GM10248 (cell line): ENCODE measurements at regions of chr2 and their contacts with region 1.

Region 1: DNA sequence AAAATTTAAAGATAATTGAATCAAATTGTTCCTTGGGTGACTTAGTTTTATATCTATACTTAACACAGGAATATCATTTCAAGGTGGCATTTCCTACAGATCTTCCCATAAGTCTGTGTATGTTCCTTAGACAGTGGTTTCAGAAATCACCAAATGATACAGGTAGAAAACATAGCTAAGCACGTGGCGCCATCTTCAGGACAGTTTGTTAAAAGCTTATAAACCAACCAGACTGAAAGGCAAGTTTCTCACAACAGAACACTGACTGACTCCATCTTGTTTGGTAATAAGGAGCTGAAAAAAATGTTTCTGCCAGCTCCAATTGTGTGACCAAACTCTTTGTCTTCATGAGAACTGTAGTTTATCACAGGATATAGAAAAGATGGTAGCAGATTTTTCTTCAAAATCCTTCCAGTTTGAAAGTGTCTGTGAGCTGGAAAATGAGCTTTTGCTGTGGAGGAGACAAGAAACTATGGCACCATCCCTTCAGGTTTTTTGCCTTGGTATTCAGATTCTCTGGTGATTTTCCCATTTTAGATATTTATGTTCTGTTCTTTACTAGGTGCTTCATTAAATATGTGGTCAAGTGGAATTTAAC is 34.8 kb upstream of the NEUROD1 start:
- DNase-seq: peak; percentile 57
- CTCF ChIP-seq: peak; percentile 79

Region 2: GRCh38 chr2:181058378-181059269 is 656.5 kb before region 1 on chr2:
- CTCF ChIA-PET with region 1: interaction called, 11 read pairs
- POLR2A ChIA-PET with region 1: no interaction called
- DNase-seq: no peak
- CTCF ChIP-seq: peak; percentile 80

Region 3: DNA sequence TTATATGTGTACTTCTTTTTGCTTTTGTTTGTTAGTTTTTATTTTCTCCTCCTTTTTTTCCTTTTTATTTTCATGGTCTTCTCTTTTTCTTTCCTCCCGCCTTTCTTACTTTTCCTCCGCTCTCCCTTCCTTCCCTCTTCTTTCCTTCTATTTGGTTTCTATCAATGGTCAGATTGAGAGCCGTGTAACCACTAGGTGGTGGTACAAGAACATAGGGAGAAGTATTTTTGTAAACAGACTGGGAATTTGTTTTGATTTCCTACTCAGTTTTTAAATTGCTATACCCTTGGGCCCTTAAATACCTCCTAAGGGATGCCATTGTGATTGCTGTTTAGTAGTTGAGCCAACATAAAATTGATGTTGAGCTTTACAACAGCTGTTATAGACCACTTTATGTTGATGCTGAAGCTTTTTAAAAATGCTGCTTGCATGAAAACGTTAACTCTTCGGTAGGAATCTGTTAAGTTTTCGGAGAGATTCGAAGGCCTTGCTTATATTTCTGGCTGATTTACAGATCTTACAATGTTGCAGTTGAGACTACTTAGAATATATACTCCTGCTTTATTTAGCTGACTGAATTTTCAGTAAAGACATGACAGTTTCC is 610.5 kb before region 1 on chr2:
- CTCF ChIA-PET with region 1: interaction called, 10 read pairs
- POLR2A ChIA-PET with region 1: no interaction called
- DNase-seq: no peak
- CTCF ChIP-seq: peak; percentile 77

Region 4: GRCh38 chr2:181563101-181563692 is 151.9 kb before region 1 on chr2:
- CTCF ChIA-PET with region 1: interaction called, 83 read pairs
- POLR2A ChIA-PET with region 1: no interaction called
- DNase-seq: no peak
- CTCF ChIP-seq: no peak

Region 5: DNA sequence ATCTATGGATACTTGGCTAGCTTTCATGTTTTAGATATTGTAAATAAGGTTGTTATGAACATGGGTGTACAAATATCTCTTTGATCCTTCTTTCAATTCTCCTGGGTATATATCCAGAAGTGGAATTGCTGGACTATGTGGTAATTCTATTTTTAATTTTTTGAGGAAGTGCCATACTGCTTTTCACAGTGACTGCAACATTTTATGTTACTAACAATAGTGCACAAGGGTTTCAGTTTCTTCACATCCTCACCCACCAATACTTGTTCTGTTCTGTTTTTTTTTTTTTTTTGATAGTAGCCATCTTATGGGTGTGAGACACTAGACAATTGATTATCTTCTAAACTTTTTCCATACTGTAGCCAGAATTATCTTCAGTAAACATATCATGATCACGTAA is 17.6 kb before region 1 on chr2:
- CTCF ChIA-PET with region 1: interaction called, 12 read pairs
- POLR2A ChIA-PET with region 1: no interaction called
- DNase-seq: no peak
- CTCF ChIP-seq: no peak

Region 6: DNA sequence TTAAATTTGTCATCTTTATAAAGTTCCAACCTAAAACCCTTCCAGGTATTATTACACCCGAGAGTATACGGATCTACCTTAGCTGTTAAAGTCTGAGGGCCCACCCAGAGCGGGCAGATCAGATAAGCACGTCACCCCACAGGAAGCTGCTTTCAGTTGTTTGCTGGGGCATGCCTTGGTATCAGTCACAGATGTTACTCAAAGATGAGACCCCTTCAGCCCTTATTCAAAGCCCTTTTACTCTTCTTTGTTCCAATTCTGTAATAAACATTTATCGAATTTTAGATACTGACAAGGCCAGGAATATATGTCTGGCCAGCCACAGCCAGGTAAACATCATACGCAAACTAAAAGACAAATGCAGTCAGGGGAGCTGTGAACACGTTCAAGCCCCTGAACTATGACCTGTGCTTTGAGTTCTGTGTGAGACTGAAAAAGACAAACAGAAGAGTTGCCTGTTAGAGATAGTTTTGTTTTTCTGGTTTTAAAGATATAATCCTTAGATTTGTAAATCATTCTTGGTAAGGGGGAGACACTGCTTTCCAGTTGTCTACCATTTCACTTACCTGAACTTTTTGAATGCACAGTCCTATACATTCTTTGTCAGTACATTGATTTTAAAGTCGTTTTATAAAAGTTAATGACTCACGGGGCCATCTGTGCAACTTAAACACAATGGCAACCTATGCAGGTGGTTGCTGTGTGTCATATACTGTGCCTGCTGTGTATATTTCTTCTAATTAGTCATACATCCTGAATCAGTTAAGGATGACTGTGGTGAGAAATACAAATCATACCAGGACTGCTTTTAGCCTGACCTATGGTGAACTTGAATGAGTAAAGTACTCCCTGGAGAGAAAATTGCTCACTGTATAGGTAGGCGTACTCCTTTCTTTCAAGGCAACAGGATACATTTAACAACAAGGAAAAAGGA is 75.9 kb after region 1 on chr2:
- CTCF ChIA-PET with region 1: no interaction called
- POLR2A ChIA-PET with region 1: no interaction called
- DNase-seq: peak; percentile 26
- CTCF ChIP-seq: no peak